Ovary (tissue), 10 donors: ENCODE measurements at regions of chr21 and their contacts with region 1.

Region 1: DNA sequence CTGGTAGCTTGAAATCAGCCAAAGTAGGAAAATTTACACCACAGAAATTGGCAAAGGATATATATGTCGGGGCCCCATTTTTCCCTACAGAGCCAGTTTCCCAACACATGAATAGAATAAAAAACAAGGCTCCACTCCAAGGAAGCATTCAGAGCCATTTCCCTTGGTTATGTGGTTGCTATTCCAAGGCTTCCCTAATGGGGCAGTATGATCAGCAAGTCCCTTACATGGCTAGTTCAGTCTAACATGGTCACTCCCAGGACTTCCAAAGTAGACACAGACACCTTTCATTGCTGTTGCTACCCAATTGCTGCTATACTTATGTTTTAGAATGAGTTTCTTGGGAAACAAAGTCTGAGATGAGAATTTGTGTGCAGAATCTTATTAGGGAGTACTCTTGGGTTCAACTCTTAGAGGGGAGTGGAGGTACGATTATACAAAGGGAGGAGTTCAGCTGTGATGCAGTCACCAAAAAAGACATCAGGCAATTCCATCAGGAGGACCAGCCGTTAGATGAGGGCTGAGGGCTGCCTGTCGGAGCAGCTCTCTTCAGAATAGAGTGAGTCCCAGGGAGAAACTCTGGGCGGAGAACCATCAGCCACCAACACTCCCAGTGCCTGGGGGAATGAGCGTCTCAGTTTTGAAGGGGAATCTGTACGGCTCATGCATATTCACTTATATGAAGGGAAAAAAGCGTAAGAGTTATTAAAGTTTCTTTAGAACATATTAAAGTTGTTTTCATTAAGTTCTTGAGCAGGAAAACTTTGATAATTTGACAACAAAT is 92.9 kb downstream of the C21orf91 start:
- DNase-seq: no peak
- H3K4me3 ChIP-seq: no peak overlapping the region
- H3K27ac ChIP-seq: no peak overlapping the region
- H3K4me1 ChIP-seq: no peaks in the 10 kb centered on the region
- H3K27me3 ChIP-seq: no peaks in the 10 kb centered on the region
- CTCF ChIP-seq: no peak
- EP300 ChIP-seq: no peak
- POLR2A ChIP-seq: no peak

Region 2: DNA sequence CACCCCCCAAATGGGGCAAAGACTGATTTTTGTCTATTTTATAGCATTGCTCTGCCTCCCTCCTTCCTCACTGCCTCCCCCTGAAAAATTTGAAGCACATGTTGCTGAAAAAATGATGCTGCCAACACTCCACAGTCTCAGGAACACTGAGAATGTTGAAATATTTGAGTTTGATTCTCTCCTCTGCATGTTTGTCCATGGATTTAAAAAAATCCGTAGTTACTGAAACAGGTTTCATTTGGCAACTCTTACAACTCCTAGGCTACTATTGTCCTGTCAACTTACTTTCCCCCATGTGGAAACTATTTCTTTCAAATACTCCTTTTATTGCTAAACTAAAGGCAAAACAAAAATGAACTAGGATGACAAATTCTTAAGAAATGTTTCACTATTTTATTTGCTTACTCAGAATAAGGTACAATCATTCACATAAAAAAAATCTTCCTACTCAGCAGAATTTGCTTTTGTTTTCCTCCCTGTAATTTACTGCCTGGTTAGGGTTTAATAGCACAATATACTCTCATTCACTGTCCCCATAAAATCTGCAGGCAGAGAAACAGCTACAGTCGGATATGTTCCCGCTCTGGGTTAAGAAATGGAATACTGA is 42.7 kb after region 1 on chr21:
- intact Hi-C with region 1: loop called in 1 of 4 experiments (anchors 1 kb)
- DNase-seq: no peak
- H3K4me3 ChIP-seq: no peak overlapping the region
- H3K27ac ChIP-seq: no peak overlapping the region
- H3K4me1 ChIP-seq: no peaks in the 10 kb centered on the region
- H3K27me3 ChIP-seq: no peaks in the 10 kb centered on the region
- CTCF ChIP-seq: no peak
- EP300 ChIP-seq: no peak
- POLR2A ChIP-seq: no peak